Activated T-helper 1 cell treated with anti-CD3 and anti-CD28 coated beads, Interleukin-12 subunit alpha, Interleukin-12 subunit beta, Interleukin-2, Interleukin-4 antibody, amounts not matched to agents 30 ng/mL and 10 ng/mL and 1 ng/mL, durations not matched to agents 14 hours and 24 hours and 36 hours (primary cell): ENCODE measurements at regions of chr4 and their contacts with region 1.

Region 1: GRCh38 chr4:80072744-80073472 is at the start of gene ANTXR2:
- DNase-seq: peak; percentile 73
- H3K4me3 Mint-ChIP-seq: peak within 1 kb of the TSS; percentile 99
- H3K27ac Mint-ChIP-seq: peak within 1 kb of the TSS; percentile 98
- H3K4me1 Mint-ChIP-seq: peaks cover 78% of the 10 kb centered on the region
- H3K27me3 Mint-ChIP-seq: peaks cover 1% of the 10 kb centered on the region
- total RNA-seq, gene ANTXR2: 24.9 and 29.8 TPM in 2 replicates

Region 2: DNA sequence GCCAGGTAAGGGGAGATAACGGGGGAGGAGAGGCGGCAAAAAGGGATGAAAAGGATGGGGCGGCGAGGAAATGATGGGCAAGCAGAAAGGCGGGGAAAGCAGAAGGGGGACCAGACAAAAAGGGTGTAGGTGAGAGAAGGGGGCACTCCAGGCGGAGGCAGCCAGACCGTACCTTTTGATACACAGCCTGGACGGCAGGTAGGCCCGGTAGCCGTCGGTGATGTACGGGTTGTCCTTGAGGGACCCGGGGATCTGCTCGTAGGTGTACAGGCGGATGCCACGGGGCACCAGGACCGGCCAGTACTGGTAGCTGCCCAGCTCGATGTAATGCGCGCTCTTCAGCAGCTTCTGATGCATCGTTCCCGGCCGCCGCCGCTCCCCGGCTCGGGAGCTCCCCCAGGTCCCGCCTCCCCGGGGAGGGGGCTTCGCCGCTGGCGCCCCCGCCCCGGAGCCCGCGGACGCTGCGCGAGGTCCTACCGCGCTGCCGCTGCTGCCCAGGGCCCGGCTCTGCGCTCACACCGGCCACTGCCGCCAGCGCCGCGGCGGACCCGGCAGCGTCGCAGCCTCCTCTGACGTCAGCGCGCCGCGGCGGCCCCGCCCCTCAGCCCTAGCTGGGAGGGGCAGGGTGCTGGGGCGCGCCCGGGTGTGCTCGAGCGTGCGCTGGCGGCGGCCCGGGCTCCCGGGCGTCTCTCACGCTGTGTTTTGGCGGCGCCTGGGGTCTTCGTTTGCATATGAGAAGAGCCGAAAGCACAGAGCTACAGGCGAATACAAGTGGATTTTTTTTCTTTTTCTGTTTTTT is 1133.8 kb before region 1 on chr4 and contains the start of gene PAQR3:
- intact Hi-C with region 1: loop called (anchors 5 kb)
- DNase-seq: peak; percentile 82
- H3K4me3 Mint-ChIP-seq: peak within 1 kb of the TSS; percentile 97
- H3K27ac Mint-ChIP-seq: peak within 1 kb of the TSS; percentile 88
- H3K4me1 Mint-ChIP-seq: peaks cover 47% of the 10 kb centered on the region
- H3K27me3 Mint-ChIP-seq: peaks cover 16% of the 10 kb centered on the region
- total RNA-seq, gene PAQR3: 19.6 and 19.8 TPM in 2 replicates

Region 3: DNA sequence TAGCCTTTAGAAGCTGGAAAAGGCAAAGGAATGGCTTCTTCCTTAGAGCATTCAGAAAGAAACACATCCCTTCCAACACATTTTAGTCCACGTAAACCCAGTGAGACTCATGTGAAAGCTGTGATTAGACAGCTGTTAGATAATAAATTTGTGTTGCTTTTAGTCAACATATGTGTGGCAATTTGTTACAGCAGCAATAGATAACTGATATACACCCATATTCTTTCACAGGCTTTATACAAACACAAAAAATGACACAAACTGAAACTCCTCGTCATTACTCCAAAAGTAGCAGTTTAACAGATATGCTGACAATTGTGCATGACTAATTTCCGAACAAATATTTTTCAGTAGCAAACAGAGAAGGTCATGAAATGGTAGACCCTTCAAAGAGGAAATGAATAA is 65.2 kb before region 1 on chr4:
- intact Hi-C with region 1: loop called (anchors 1 kb)
- DNase-seq: no peak
- H3K4me3 Mint-ChIP-seq: peak overlapping the region; percentile 41
- H3K27ac Mint-ChIP-seq: peak overlapping the region; percentile 88
- H3K4me1 Mint-ChIP-seq: peaks cover 74% of the 10 kb centered on the region
- H3K27me3 Mint-ChIP-seq: no peaks in the 10 kb centered on the region

Region 4: GRCh38 chr4:80058740-80059139 is 14.2 kb before region 1 on chr4:
- intact Hi-C with region 1: loop called (anchors 1 kb)
- DNase-seq: peak; percentile 52
- H3K4me3 Mint-ChIP-seq: peak overlapping the region; percentile 82
- H3K27ac Mint-ChIP-seq: peak overlapping the region; percentile 99
- H3K4me1 Mint-ChIP-seq: peaks cover 73% of the 10 kb centered on the region
- H3K27me3 Mint-ChIP-seq: no peaks in the 10 kb centered on the region

Region 5: GRCh38 chr4:80153874-80154544 is 81.1 kb after region 1 on chr4:
- intact Hi-C with region 1: loop called (anchors 1 kb)
- DNase-seq: no peak
- H3K4me3 Mint-ChIP-seq: peak overlapping the region; percentile 21
- H3K27ac Mint-ChIP-seq: peak overlapping the region; percentile 90
- H3K4me1 Mint-ChIP-seq: peaks cover 27% of the 10 kb centered on the region
- H3K27me3 Mint-ChIP-seq: peaks cover 3% of the 10 kb centered on the region

Region 6: GRCh38 chr4:80202190-80202711 is 129.3 kb after region 1 on chr4:
- intact Hi-C with region 1: loop called (anchors 1 kb)
- DNase-seq: peak; percentile 79
- H3K4me3 Mint-ChIP-seq: peak overlapping the region; percentile 80
- H3K27ac Mint-ChIP-seq: peak overlapping the region; percentile 73
- H3K4me1 Mint-ChIP-seq: peaks cover 29% of the 10 kb centered on the region
- H3K27me3 Mint-ChIP-seq: peaks cover 21% of the 10 kb centered on the region

Region 7: GRCh38 chr4:80989921-80990544 is 917.1 kb after region 1 on chr4:
- intact Hi-C with region 1: no loop called
- DNase-seq: no peak
- H3K4me3 Mint-ChIP-seq: no peak overlapping the region
- H3K27ac Mint-ChIP-seq: no peak overlapping the region
- H3K4me1 Mint-ChIP-seq: no peaks in the 10 kb centered on the region
- H3K27me3 Mint-ChIP-seq: no peaks in the 10 kb centered on the region